Ascending aorta (tissue), 2 donors: ENCODE measurements at regions of chr2 and their contacts with region 1.

Region 1: DNA sequence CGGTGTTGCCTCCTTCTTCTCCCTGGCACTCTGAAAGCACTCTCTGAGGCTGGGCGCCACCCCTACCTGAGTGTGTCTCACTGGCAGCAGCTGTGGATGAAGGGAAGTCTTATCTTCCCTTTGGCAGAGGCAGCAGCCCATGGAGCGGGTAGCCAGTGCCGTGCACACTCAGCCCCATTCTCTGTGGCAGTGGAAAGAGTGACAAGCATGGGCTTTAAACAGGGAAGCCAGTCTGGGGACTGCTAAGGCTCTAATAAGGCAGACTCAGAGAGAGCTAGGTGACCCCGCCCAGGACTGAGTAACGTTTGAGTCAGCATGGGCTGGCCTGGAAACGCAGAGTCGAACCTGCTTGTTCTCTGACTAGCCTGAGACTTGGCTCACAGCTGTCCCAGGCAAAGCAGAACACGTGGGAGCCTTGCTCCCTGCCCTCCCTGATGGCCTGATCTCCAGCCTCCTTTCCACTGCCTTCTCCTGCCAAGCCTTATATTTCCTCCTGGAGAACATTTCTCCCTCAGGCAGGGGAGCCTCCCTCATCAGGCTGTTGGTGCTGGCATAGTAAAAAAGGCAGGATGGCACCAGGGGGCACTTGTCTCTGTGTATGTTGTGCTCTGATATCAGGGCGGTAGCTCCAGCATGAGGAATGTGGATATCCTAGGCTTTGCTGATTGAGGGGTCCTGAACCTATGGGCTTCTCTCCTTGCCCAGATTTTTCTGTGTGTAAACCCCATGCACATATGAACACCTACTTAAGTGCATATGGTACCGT is 93.9 kb upstream of the LGALSL start:
- DNase-seq: peak; percentile 90 to 97
- H3K4me3 ChIP-seq: no peak overlapping the region
- H3K27ac ChIP-seq: peak overlapping the region; percentile 72 to 78
- H3K4me1 ChIP-seq: peaks cover 0 to 10% of the 10 kb centered on the region in 2 donors
- H3K27me3 ChIP-seq: no peaks in the 10 kb centered on the region
- CTCF ChIP-seq: no peak

Region 2: GRCh38 chr2:64404002-64404731 is 44.1 kb after region 1 on chr2:
- intact Hi-C with region 1: loop called (anchors 2 kb)
- DNase-seq: peak; percentile 38 to 92
- H3K4me3 ChIP-seq: peak overlapping the region in 1 of 2 donors; percentile 32
- H3K27ac ChIP-seq: peak overlapping the region; percentile 91
- H3K4me1 ChIP-seq: peaks cover 18% of the 10 kb centered on the region in 2 donors
- H3K27me3 ChIP-seq: no peaks in the 10 kb centered on the region
- CTCF ChIP-seq: no peak

Region 3: GRCh38 chr2:64558445-64559081 is 198.5 kb after region 1 on chr2:
- intact Hi-C with region 1: no loop called
- DNase-seq: no peak
- H3K4me3 ChIP-seq: no peak overlapping the region
- H3K27ac ChIP-seq: no peak overlapping the region
- H3K4me1 ChIP-seq: peaks cover 4 to 8% of the 10 kb centered on the region in 2 donors
- H3K27me3 ChIP-seq: no peaks in the 10 kb centered on the region
- CTCF ChIP-seq: no peak